Activated naive CD4-positive, alpha-beta T cell treated with anti-CD3 and anti-CD28 coated beads for 36 hours (primary cell): ENCODE measurements at regions of chr6 and their contacts with region 1.

Region 1: GRCh38 chr6:33248925-33249731 is 22.5 kb downstream of the VPS52 start:
- DNase-seq: peak; percentile 99
- H3K4me3 Mint-ChIP-seq: peak overlapping the region; percentile 90
- H3K27ac Mint-ChIP-seq: peak overlapping the region; percentile 93
- H3K4me1 Mint-ChIP-seq: peaks cover 37% of the 10 kb centered on the region
- H3K27me3 Mint-ChIP-seq: no peaks in the 10 kb centered on the region

Region 2: DNA sequence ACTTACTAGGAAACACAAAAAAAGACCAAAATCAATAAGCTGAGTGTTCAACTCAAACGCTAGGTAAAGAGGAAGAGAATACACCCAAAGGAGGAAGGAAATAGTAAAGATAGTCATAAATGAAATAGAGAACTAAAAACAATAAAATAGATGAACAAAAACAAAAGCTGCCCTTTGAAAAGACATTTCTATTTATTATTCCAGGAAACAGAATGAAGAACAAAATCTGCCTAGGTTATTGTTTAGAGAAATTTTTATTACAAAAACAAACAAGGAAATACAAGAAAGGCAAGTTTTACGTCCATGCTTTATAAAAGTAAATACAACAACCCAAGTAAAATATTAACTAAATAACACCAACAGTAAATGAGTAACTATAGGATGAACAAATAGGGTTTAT is 328.4 kb before region 1 on chr6:
- CTCF ChIA-PET with region 1: no interaction called
- intact Hi-C with region 1: no loop called
- DNase-seq: no peak
- H3K4me3 Mint-ChIP-seq: no peak overlapping the region
- H3K27ac Mint-ChIP-seq: no peak overlapping the region
- H3K4me1 Mint-ChIP-seq: no peaks in the 10 kb centered on the region
- H3K27me3 Mint-ChIP-seq: no peaks in the 10 kb centered on the region

Region 3: GRCh38 chr6:33014841-33015634 is 234.1 kb before region 1 on chr6:
- CTCF ChIA-PET with region 1: interaction called, 5 read pairs
- intact Hi-C with region 1: loop called (anchors 1 kb)
- DNase-seq: peak; percentile 64
- H3K4me3 Mint-ChIP-seq: no peak overlapping the region
- H3K27ac Mint-ChIP-seq: no peak overlapping the region
- H3K4me1 Mint-ChIP-seq: peaks cover 12% of the 10 kb centered on the region
- H3K27me3 Mint-ChIP-seq: no peaks in the 10 kb centered on the region

Region 4: DNA sequence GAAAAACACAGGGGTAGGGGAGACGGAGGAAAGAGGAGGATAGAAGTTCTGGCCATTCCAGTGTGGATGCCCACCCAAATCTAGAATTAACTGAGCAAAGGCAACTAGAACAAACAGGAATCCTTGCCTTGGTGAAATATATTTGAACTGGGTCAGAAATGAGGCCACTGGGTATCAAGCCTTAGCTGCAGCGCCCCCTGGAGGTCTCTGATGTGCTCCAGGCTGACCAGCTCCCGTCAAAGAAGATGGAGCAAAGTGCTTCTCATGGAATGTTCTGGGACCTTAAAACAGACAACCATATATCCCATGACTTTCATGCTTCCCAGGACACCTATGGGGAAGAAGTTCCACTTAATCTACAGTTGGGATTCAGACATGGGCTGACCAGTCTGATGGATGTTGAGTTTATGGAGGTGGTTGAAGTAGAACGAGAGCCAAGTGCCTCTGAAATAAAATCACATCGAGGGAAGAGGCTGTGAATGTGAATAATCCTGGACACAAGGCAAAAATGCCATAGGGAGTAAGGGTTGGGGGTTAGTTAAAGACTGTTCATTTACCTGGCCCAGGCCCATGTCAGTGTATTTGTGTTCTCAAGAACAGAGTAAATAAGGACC is 122.9 kb before region 1 on chr6:
- CTCF ChIA-PET with region 1: interaction called, 43 read pairs
- intact Hi-C with region 1: loop called (anchors 1 kb)
- DNase-seq: peak; percentile 77
- H3K4me3 Mint-ChIP-seq: no peak overlapping the region
- H3K27ac Mint-ChIP-seq: no peak overlapping the region
- H3K4me1 Mint-ChIP-seq: no peaks in the 10 kb centered on the region
- H3K27me3 Mint-ChIP-seq: peaks cover 5% of the 10 kb centered on the region

Region 5: DNA sequence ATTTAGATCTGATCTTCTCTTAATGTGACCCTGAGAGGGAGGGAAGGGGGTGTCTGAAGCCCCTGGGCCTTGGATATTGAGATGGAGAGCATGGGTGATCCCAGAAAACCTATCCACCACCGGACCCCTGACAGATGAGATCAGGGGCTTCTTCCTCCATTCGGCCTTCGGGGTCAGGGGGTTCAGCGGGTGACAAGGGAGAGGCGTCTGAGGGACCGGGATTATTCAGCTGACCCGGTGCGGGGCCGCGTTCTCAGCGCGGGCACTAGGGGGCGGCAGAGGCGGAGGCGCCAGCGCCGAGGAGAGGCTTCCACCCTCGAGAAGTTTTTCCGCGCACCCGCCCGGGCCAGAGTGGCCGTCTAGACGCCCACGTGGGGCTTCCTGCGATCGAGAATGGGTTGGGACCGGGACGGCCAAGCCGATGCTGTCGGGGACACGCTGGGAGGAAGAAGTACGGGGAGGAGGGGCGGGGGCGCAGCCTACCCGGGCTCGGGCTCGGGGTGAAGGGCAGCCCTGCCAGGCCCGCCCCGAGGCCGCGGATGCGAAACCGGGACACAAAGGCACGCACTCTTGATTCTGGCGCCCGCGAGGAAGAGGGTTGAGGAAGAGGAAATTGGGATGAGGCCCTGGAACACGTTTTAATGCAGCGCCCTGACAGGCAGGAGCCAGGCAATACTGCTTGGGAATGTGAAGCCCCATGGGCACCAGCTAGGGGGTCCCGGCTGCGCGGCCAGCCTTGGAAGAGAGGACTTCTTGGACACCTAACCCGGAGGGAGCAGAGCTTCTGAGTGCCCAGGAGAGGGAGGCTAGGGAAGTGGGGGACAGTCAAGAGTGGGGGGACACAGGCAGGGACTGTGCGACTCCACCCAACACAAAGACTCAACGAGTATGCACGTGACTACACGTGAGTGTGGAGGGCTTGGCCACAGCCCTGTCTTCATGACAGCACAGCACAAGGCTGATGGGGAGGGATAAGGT is 87.5 kb before region 1 on chr6:
- CTCF ChIA-PET with region 1: interaction called, 57 read pairs
- intact Hi-C with region 1: loop called (anchors 1 kb)
- DNase-seq: peak; percentile 85
- H3K4me3 Mint-ChIP-seq: peak overlapping the region; percentile 78
- H3K27ac Mint-ChIP-seq: no peak overlapping the region
- H3K4me1 Mint-ChIP-seq: peaks cover 12% of the 10 kb centered on the region
- H3K27me3 Mint-ChIP-seq: no peaks in the 10 kb centered on the region

Region 6: DNA sequence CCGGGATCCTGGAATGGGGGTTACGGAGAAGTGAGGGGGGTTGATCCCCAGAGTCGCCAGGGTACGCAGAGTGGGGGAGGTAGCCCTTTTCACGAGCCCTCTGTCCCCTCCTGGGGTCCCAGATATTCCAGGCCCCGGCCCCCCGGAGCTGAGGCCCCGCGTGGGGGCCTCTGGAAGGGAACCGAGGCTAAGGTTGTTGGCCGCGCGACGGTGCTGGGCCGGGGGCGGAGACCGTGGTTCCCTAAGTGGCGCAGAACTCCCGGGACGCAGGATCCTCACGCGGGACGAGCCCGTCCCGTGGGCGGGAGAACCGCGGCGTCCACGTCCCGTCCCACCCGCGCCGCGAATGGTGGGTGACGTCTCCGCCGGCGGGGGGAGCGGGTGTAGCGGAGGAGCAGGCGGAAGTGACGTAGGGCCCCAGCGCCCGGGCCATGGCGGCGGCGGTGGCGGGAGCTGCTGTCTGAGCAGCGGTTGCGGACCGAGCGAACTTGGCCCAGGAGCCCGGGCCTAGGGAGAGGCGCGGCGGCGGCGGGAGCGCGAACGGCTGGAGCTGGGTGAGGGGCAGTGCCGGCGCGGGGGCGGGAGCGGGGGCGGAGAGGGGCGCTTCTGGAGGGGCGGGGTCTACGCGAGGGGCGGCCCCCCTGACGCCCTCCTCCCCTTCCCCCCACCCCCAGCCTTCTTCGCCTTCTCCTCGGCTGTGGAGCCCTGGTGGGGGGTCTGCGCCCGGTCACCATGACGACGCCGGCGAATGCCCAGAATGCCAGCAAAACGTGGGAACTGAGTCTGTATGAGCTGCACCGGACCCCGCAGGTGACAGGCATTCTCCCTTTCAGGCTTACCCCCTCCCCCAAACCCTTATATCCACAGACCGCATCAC is 40.8 kb before region 1 on chr6 and contains the start of gene RING1:
- CTCF ChIA-PET with region 1: interaction called, 13 read pairs
- intact Hi-C with region 1: loop called (anchors 1 kb)
- DNase-seq: peak; percentile 87
- H3K4me3 Mint-ChIP-seq: peak within 1 kb of the TSS; percentile 90
- H3K27ac Mint-ChIP-seq: peak within 1 kb of the TSS; percentile 92
- H3K4me1 Mint-ChIP-seq: peaks cover 55% of the 10 kb centered on the region
- H3K27me3 Mint-ChIP-seq: peaks cover 8% of the 10 kb centered on the region
- total RNA-seq, gene RING1: 17.1 to 18.2 TPM

Region 7: GRCh38 chr6:33288921-33289748 is 40.0 kb after region 1 on chr6 and contains the starts of genes PFDN6 and WDR46:
- CTCF ChIA-PET with region 1: interaction called, 3 read pairs
- intact Hi-C with region 1: loop called (anchors 1 kb)
- DNase-seq: peak; percentile 85
- H3K4me3 Mint-ChIP-seq: peak within 1 kb of the TSS; percentile 99
- H3K27ac Mint-ChIP-seq: peak within 1 kb of the TSS; percentile 91
- H3K4me1 Mint-ChIP-seq: peaks cover 43% of the 10 kb centered on the region
- H3K27me3 Mint-ChIP-seq: no peaks in the 10 kb centered on the region
- total RNA-seq, gene PFDN6: 67.9 to 81.3 TPM
- total RNA-seq, gene WDR46: 42.5 to 42.9 TPM

Region 8: DNA sequence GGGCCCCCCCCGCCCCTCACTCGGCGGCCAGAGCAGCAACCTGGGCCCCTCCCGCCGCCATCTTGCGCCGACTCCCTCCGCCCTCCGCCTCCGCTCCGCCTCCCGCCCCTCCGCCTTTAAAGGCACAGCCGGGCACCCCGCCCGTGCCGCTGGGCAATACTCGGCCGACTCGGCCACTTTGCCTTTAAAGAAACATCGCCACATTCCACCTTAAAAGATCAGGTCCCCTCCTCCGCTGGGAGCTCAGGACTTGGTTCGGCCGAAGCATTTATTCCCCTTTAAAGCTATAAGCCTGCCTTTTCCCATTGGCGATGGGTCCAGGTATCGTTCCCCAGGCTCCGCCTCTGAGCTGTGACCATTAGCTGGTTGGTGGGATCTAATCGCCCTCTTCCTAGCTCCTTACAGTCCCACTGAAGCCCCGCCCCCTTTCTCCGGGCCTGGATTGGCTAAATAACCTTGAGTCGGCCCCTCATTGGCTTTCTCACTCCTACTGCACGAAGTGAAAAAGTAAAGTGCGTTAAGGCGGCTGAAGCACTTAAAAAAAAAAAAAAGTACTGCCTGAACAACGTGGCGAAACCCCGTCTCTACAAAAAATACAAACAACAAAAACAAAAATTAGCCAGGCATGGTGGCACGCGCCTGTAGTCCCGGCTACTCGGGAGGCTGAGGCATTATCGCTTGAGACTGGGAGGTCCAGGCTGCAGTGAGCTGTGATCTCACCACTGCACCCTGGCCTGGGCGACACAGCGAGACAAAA is 68.7 kb after region 1 on chr6 and contains the start of gene ZBTB22:
- CTCF ChIA-PET with region 1: interaction called, 5 read pairs
- intact Hi-C with region 1: loop called (anchors 1 kb)
- DNase-seq: peak; percentile 97
- H3K4me3 Mint-ChIP-seq: peak within 1 kb of the TSS; percentile 94
- H3K27ac Mint-ChIP-seq: peak within 1 kb of the TSS; percentile 95
- H3K4me1 Mint-ChIP-seq: peaks cover 72% of the 10 kb centered on the region
- H3K27me3 Mint-ChIP-seq: no peaks in the 10 kb centered on the region
- total RNA-seq, gene ZBTB22: 8.8 to 9.0 TPM